ENCODE measurements at regions of chrX and their contacts with region 1.

Region 1: GRCh38 chrX:72018277-72019112 is 107.8 kb downstream of the NHSL2 start:
- DNase-seq: peak; percentile 69 to 89 (median 77)
- H3K4me3 ChIP-seq: no peak overlapping the region
- H3K4me3 Mint-ChIP-seq: peak overlapping the region in 4 of 7 donors; percentile 5 to 70 (median 22)
- H3K27ac ChIP-seq: no peak overlapping the region
- H3K27ac Mint-ChIP-seq: peak overlapping the region in 5 of 8 donors; percentile 12 to 69 (median 44)
- H3K4me1 ChIP-seq: peaks cover 5% of the 10 kb centered on the region
- H3K4me1 Mint-ChIP-seq: peaks cover 7 to 23% (median 11%) of the 10 kb centered on the region in 3 donors
- H3K27me3 ChIP-seq: no peaks in the 10 kb centered on the region
- H3K27me3 Mint-ChIP-seq: peaks cover 0 to 22% of the 10 kb centered on the region in 2 donors

Region 2: DNA sequence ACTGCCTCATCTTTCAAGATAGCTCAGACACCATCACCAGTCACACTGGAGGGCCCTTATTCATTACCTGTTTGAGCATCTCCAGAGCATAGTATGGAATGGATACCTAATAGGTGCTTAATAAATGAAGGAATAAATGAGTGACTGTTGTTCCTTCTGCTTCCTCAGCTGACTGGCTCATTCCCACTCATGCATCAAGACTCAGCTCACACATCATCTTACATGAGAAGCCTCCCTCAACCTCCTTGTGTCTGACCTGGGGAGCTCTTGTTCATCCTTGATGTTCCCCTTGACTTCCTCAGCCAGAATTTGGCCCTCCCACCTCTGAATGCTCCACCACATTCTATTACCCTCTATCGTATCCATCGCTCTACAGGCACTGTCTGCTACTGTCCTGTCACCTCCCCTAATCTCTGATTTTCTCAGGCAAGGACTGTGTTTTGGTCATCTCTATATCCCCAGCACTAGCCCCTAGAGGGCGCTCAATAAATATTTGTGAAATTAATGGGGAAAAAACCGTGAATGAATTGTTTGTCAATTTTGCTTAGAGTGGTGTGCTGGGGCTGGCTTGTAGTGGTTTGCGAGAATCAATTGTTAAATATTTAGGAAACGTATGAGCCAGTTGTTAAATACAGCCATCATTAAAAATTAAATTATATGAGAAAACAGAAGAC is 19.5 kb before region 1 on chrX:
- CTCF ChIA-PET with region 1: interaction called, 13 read pairs
- POLR2A ChIA-PET with region 1: no interaction called
- DNase-seq: peak; percentile 1 to 48 (median 17)
- H3K4me3 ChIP-seq: no peak overlapping the region
- H3K4me3 Mint-ChIP-seq: peak overlapping the region in 1 of 7 donors; percentile 49
- H3K27ac ChIP-seq: no peak overlapping the region
- H3K27ac Mint-ChIP-seq: peak overlapping the region in 2 of 8 donors; percentile 17 to 40
- H3K4me1 ChIP-seq: peaks cover under 1% of the 10 kb centered on the region
- H3K4me1 Mint-ChIP-seq: peaks cover 7 to 19% (median 9%) of the 10 kb centered on the region in 3 donors
- H3K27me3 ChIP-seq: no peaks in the 10 kb centered on the region
- H3K27me3 Mint-ChIP-seq: peaks cover 5 to 16% of the 10 kb centered on the region in 2 donors

Region 3: DNA sequence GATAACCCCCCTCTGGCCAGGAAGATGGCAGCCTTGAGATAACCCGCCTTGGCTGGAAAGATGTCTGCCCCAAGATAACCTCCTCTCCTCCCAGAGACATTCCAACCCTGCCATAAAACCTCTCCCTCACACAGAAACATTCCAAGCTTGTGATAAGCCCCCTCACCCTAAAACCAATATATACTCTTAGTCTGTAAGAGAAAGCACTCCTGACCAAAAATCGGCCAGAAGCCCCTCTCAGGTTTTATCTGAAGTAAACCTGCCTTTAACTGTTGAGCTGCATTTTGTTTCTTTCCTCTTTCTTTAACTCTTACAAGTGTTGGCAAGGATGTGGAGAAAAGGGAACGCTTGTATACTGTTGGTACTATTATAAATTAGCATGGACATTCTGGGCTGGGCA is 211.8 kb after region 1 on chrX:
- CTCF ChIA-PET with region 1: no interaction called
- POLR2A ChIA-PET with region 1: no interaction called
- DNase-seq: no peak
- H3K4me3 ChIP-seq: no peak overlapping the region
- H3K4me3 Mint-ChIP-seq: no peak overlapping the region
- H3K27ac ChIP-seq: no peak overlapping the region
- H3K27ac Mint-ChIP-seq: no peak overlapping the region
- H3K4me1 ChIP-seq: no peaks in the 10 kb centered on the region
- H3K4me1 Mint-ChIP-seq: no peaks in the 10 kb centered on the region
- H3K27me3 ChIP-seq: no peaks in the 10 kb centered on the region
- H3K27me3 Mint-ChIP-seq: peaks cover 0 to 2% of the 10 kb centered on the region in 2 donors

Measured in CD8-positive, alpha-beta memory T cell (primary cell).